Activated T-helper 2 cell treated with anti-CD3 and anti-CD28 coated beads, Interferon-gamma antibody, Interleukin-2, Interleukin-4, amounts not matched to agents 10 μg/mL and 5 μg/mL and 100 μg/mL, durations not matched to agents 14 hours and 24 hours and 36 hours (primary cell): ENCODE measurements at regions of chr16 and their contacts with region 1.

Region 1: GRCh38 chr16:57462209-57462977 is at the start of gene POLR2C:
- DNase-seq: peak; percentile 89
- H3K4me3 Mint-ChIP-seq: peak within 1 kb of the TSS; percentile 100
- H3K27ac Mint-ChIP-seq: peak within 1 kb of the TSS; percentile 100
- H3K4me1 Mint-ChIP-seq: peaks cover 21% of the 10 kb centered on the region
- H3K27me3 Mint-ChIP-seq: no peaks in the 10 kb centered on the region
- total RNA-seq, gene POLR2C: 73.6 and 75.6 TPM in 2 replicates

Region 2: DNA sequence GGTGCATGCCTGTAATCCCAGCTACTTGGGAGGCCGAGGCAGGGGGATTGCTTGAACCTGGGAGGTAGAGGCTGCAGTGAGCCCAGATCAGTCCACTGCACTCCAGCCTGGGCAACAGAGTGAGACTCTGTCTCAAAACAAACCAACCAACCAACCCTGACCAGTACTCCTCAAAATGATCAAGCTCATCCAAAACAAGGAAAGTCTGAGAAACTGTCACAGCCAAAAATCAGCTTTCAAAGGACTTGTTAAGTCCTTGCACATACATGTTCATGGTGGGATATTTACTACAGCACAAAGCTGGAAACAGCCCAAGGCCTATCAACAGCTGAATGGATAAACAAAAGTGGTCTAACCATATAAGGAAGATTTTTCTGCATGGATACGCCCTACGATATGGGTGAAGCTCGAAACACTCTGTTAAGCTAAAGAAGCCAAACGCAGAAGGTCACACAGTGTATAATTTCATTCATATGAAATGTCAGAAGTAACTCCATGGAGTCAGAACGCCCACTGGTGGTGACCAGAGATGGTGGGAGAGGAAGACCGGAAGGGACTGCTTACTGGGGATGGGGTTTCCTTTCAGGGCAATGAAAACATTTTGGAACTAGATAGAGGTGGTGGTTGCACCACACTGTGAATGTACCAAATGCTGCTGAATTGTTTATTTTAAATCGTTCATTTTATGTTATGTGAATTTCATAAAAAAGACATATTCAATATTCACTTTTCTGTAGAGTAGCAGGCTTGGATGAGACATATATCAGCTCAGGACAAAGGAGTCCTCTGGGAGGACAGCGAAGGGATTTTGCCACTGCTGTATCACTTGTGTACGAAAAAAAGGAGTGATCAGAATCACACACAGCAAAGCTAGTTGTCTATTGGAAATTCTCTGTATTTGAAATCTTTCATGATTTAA is 40.1 kb before region 1 on chr16:
- intact Hi-C with region 1: loop called (anchors 1 kb)
- DNase-seq: no peak
- H3K4me3 Mint-ChIP-seq: no peak overlapping the region
- H3K27ac Mint-ChIP-seq: no peak overlapping the region
- H3K4me1 Mint-ChIP-seq: peaks cover 14% of the 10 kb centered on the region
- H3K27me3 Mint-ChIP-seq: no peaks in the 10 kb centered on the region

Region 3: DNA sequence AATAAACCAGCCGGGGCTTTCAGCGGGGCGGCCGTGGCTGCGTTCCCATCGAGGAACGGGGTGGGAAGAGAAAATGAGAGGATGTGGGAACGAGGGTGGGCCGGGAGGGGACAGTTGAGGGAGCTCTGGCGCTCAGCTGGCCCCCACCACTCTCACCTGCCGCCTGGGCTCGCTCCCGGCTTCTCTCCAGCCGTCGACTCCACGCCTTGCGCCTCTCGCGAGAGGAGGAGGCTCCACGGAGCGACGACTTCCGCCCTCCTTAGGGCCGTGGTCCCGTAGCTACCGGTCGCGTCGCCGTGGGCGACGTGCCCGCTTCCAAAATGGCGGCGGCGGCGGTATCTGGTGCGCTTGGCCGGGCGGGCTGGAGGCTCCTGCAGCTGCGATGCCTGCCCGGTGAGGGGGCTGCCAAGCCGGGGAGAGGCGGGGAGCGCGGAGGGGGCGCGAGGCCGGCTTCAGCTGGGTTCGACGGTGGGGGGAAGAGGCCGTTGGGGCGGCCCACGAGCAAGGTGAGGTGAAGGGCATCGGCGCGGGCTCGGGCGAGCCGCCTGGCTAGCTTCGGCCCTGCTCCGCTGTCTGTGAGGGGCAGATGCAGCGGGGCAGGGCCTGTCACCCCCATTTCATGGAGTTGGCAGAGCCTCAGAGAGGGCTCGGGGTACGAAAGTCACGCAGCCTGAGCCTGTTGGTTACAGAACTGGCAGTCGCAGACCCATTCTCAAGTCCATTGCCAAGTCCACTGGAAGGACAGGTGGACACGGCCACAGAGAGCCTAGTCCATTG is 15.0 kb before region 1 on chr16 and contains the starts of genes CIAPIN1 and COQ9:
- intact Hi-C with region 1: loop called (anchors 1 kb)
- DNase-seq: peak; percentile 87
- H3K4me3 Mint-ChIP-seq: peak within 1 kb of the TSS; percentile 93
- H3K27ac Mint-ChIP-seq: peak within 1 kb of the TSS; percentile 87
- H3K4me1 Mint-ChIP-seq: peaks cover 26% of the 10 kb centered on the region
- H3K27me3 Mint-ChIP-seq: no peaks in the 10 kb centered on the region
- total RNA-seq, gene CIAPIN1: 66.8 and 73.1 TPM in 2 replicates
- total RNA-seq, gene COQ9: 47.4 and 48.3 TPM in 2 replicates